Right ventricle myocardium inferior (tissue), 1 donor: ENCODE measurements at regions of chr3 and their contacts with region 1.

Region 1: GRCh38 chr3:12758025-12758830 is 831 bp downstream of the TMEM40 start:
- DNase-seq: peak; percentile 74
- ATAC-seq: peak; percentile 66

Region 2: GRCh38 chr3:12719984-12720898 is 38.0 kb before region 1 on chr3:
- intact Hi-C with region 1: loop called (anchors 5 kb)
- DNase-seq: peak; percentile 83
- ATAC-seq: peak; percentile 96

Region 3: GRCh38 chr3:12868039-12869034 is 110.1 kb after region 1 on chr3:
- intact Hi-C with region 1: no loop called
- DNase-seq: peak; percentile 91
- ATAC-seq: peak; percentile 95